ENCODE measurements at regions of chr14 and their contacts with region 1.

Region 1: DNA sequence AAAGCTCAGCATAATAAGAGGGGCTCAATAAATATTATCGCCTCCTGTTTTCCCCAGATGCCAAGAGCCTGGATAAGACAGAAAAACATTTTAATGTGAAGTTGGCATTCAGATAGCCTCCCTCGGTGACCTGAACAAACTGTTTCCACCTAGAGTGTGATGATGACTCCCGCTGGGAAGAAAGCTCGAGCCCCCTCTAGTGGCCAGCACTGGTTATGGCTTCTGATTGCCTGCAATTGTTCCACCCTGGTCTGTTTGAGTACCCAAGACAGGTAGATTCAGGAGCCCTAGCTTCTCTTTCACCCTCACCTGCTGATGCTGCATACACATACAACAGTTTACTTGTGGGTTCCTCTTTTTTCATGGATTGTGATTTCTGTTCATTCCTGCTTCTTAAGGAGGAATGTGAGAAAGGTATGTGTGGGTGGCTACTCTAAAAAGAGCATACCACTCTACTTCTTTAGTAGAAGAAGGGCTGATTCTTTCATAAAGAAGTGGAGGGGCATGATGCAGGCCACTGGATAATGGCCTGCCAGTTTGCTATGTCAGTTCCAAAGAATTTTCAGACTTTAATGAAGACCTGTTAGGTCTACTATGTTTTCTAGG is 6.4 kb downstream of the ERG28 start:
- DNase-seq: peak; percentile 61
- H3K4me3 ChIP-seq: no peak overlapping the region
- H3K27ac ChIP-seq: no peak overlapping the region
- H3K4me1 ChIP-seq: peaks cover 11% of the 10 kb centered on the region
- H3K27me3 ChIP-seq: no peaks in the 10 kb centered on the region
- CTCF ChIP-seq: peak; percentile 99

Region 2: GRCh38 chr14:75497191-75497590 is 157.0 kb before region 1 on chr14:
- CTCF ChIA-PET with region 1: no interaction called
- dilution Hi-C with region 1: no loop called
- in situ Hi-C with region 1: no loop called
- intact Hi-C with region 1: loop called (anchors 10 kb)
- DNase-seq: no peak
- H3K4me3 ChIP-seq: no peak overlapping the region
- H3K27ac ChIP-seq: no peak overlapping the region
- H3K4me1 ChIP-seq: no peaks in the 10 kb centered on the region
- H3K27me3 ChIP-seq: no peaks in the 10 kb centered on the region
- CTCF ChIP-seq: no peak

Region 3: GRCh38 chr14:75570797-75571196 is 83.4 kb before region 1 on chr14:
- CTCF ChIA-PET with region 1: no interaction called
- dilution Hi-C with region 1: loop called (anchors 5 kb)
- in situ Hi-C with region 1: loop called (anchors 5 kb)
- intact Hi-C with region 1: no loop called
- DNase-seq: no peak
- H3K4me3 ChIP-seq: no peak overlapping the region
- H3K27ac ChIP-seq: no peak overlapping the region
- H3K4me1 ChIP-seq: no peaks in the 10 kb centered on the region
- H3K27me3 ChIP-seq: no peaks in the 10 kb centered on the region
- CTCF ChIP-seq: no peak

Region 4: GRCh38 chr14:75577729-75578101 is 76.5 kb before region 1 on chr14:
- CTCF ChIA-PET with region 1: interaction called, 10 read pairs
- dilution Hi-C with region 1: loop called (anchors 5 kb)
- in situ Hi-C with region 1: loop called (anchors 5 kb)
- intact Hi-C with region 1: loop called (anchors 1 kb)
- DNase-seq: peak; percentile 66
- H3K4me3 ChIP-seq: peak overlapping the region; percentile 51 to 71 (median 51)
- H3K27ac ChIP-seq: peak overlapping the region; percentile 17
- H3K4me1 ChIP-seq: peaks cover 10% of the 10 kb centered on the region
- H3K27me3 ChIP-seq: no peaks in the 10 kb centered on the region
- CTCF ChIP-seq: peak; percentile 74 to 89

Region 5: DNA sequence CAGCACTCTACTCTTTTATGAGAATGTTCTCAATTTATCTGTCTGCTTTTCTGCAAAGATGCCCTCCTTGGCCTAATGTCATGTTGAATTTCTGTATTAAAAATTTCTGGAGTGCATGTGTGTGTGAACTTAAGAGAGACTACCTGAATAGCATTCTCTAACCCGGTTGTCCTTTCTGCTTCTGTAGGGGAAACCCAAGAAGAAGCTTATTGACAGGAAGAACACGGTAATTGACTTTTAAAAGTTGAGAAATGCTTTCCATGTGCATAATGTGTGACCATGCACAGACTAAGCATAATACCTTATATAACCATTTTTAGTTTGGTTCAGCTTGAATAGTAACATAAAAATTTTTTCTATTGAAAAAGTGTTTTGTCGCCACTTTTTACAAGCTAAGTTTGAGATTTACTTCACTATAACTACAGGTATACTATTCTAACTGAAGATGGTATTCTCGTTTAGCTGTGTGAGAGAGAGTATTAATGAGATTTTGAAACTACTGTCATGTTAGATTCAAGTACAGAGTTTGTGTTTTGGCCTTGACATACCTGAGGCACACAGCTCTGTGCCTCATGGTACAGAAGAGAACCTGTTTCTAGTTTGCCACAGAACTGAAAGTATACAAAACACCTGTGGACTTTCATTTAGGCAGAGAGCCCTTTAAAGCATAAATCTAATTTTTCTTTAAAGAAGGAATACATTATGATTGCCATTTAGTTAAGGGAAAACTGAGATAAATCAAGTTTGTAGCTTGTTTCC is 103.6 kb after region 1 on chr14:
- CTCF ChIA-PET with region 1: no interaction called
- dilution Hi-C with region 1: no loop called
- in situ Hi-C with region 1: no loop called
- intact Hi-C with region 1: no loop called
- DNase-seq: no peak
- H3K4me3 ChIP-seq: no peak overlapping the region
- H3K27ac ChIP-seq: no peak overlapping the region
- H3K4me1 ChIP-seq: no peaks in the 10 kb centered on the region
- H3K27me3 ChIP-seq: no peaks in the 10 kb centered on the region
- CTCF ChIP-seq: no peak

Measured in mammary epithelial cell (primary cell).